AG04449 (cell line): ENCODE measurements at regions of chr4 and their contacts with region 1.

Region 1: DNA sequence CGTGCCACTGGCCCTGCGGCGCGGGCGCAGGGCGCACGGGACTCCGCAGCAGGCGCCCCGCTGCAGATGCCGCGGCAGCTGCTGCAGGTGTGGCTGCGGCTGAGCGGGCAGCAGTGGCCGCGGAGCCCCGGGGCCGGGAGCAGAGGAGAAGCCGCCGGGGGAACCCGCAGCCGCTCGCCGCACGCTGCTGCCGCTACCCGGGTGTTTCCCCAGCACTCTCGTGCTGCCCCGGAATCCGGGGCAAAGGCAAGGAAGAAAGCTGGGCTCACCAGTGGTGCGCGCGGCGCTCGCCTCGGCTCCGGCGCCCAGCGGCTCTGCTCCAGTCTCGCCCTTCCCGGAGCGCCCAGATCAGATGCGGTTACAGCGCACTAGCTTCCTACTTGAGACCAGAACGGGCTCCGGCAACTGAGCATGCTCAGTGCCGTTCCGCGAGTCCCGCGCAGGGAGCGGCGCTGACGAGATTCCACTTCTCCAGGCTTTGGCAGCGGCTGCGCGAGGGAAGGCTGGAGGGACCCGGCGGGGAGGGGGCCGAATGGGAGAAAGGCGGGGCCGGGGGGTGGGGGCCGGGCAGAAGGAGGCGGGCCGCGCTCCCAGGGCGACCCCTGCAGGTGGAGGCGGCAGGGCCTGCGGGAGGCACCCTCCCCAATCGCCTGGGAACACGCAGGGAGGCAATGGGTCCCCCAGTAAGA is at the start of gene APBB2:
- DNase-seq: peak; percentile 74
- H3K4me3 ChIP-seq: peak within 1 kb of the TSS; percentile 86
- CTCF ChIP-seq: peak; percentile 88

Region 2: DNA sequence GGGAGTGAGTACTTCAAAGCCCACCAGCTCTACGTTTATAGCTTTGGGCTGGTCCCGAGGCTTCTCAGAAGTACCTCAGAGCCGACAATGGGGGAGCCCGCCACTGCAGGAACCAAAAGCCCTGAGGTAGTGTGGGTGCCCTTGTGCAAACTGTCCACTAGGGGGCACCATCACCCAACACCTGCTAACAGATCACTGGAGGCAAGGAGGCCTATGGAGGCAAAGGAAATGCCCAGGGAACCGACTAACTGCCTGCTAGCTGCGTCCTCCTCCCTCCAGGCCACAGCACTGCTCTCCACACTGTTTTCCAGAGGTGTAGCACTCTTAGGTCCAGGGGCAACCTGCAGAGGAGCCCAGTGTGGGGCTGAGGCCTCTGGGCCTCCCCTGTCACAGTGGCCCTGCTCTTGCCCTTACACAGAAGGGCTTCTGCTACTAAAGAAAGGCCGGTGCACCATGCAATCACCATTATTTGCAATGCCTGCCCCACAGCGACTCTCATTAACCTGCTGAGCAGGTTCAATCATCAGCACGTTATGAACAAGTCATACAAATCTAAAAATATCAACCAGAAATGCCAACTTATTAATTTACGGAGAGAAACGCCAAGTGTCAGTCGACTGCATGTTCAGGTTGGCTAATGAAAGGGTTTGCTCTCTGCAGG is 305.4 kb before region 1 on chr4:
- CTCF ChIA-PET with region 1: interaction called, 11 read pairs
- POLR2A ChIA-PET with region 1: no interaction called
- DNase-seq: peak; percentile 7
- H3K4me3 ChIP-seq: no peak overlapping the region
- CTCF ChIP-seq: peak; percentile 87

Region 3: GRCh38 chr4:40953283-40954087 is 260.8 kb before region 1 on chr4:
- CTCF ChIA-PET with region 1: interaction called, 11 read pairs
- POLR2A ChIA-PET with region 1: interaction called, 4 read pairs
- DNase-seq: no peak
- H3K4me3 ChIP-seq: no peak overlapping the region
- CTCF ChIP-seq: no peak

Region 4: DNA sequence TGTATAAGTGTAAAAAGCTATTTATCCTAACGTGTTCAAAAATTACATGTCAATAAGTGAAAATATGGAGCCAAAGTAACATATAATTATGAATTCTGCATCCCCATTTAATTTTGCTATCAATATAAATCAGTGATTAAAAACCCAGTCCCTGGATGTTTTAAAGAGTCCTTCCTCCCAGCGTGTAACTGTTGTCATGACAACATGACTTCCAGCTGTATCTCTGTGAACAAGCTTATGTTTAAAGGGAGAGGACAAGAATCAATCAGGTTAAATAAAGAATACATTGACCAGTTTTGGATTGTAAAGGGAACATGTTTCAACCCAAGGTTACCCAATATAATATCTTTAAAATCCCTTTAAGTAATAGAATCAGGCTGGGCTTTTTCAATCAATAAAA is 244.8 kb before region 1 on chr4:
- CTCF ChIA-PET with region 1: interaction called, 205 read pairs
- POLR2A ChIA-PET with region 1: no interaction called
- DNase-seq: no peak
- H3K4me3 ChIP-seq: no peak overlapping the region
- CTCF ChIP-seq: no peak

Region 5: GRCh38 chr4:40976343-40976742 is 237.9 kb before region 1 on chr4:
- CTCF ChIA-PET with region 1: interaction called, 205 read pairs
- POLR2A ChIA-PET with region 1: interaction called, 5 read pairs
- DNase-seq: no peak
- H3K4me3 ChIP-seq: no peak overlapping the region
- CTCF ChIP-seq: peak; percentile 55

Region 6: GRCh38 chr4:41177016-41177415 is 37.3 kb before region 1 on chr4:
- CTCF ChIA-PET with region 1: interaction called, 11 read pairs
- POLR2A ChIA-PET with region 1: interaction called, 3 read pairs
- DNase-seq: no peak
- H3K4me3 ChIP-seq: no peak overlapping the region
- CTCF ChIP-seq: peak; percentile 22

Region 7: GRCh38 chr4:41196633-41197332 is 17.5 kb before region 1 on chr4:
- CTCF ChIA-PET with region 1: interaction called, 10 read pairs
- POLR2A ChIA-PET with region 1: no interaction called
- DNase-seq: no peak
- H3K4me3 ChIP-seq: no peak overlapping the region
- CTCF ChIP-seq: no peak